A673 (cell line): ENCODE measurements at regions of chr18 and their contacts with region 1.

Region 1: DNA sequence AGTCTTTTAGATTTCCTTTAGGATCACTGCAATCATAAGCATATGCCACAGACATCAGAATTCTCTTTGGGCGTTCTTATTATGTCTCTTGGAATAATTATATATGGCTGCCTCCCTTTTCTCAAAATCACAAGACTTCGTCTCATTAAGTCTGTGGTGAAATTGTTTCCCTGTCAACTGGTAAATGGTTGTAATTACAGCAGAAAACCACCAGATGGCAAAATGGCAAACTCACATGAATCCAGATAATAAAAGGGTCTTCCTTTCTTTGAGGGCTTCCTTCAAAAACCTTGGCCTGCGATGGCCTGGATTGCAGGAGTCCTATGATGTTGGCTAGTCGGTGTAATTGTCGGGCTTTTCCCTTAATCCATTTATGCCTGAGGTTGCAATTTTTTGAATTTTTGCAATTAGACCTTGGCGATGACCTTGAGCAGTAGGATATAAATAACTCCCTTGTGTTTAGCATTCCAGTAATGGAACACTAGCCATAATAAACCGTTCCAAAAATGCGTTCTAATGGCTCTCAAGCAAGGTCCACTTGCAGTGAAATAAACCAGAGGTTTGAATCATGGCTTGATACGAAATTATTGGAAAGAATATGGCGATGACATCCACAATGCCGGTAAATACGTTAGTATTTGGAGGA is 656.4 kb downstream of the MBD2 start:
- DNase-seq: peak; percentile 71
- H3K4me3 ChIP-seq: no peak overlapping the region
- H3K27ac ChIP-seq: no peak overlapping the region
- H3K4me1 ChIP-seq: no peaks in the 10 kb centered on the region
- H3K27me3 ChIP-seq: peaks cover 4% of the 10 kb centered on the region
- CTCF ChIP-seq: peak; percentile 64

Region 2: GRCh38 chr18:53531187-53531586 is 36.9 kb before region 1 on chr18:
- CTCF ChIA-PET with region 1: no interaction called
- POLR2A ChIA-PET with region 1: no interaction called
- intact Hi-C with region 1: no loop called
- DNase-seq: peak; percentile 10
- H3K4me3 ChIP-seq: no peak overlapping the region
- H3K27ac ChIP-seq: no peak overlapping the region
- H3K4me1 ChIP-seq: peaks cover 12% of the 10 kb centered on the region
- H3K27me3 ChIP-seq: no peaks in the 10 kb centered on the region
- CTCF ChIP-seq: no peak

Region 3: GRCh38 chr18:53817976-53818950 is 250.2 kb after region 1 on chr18:
- CTCF ChIA-PET with region 1: no interaction called
- POLR2A ChIA-PET with region 1: no interaction called
- intact Hi-C with region 1: no loop called
- DNase-seq: peak; percentile 63
- H3K4me3 ChIP-seq: no peak overlapping the region
- H3K27ac ChIP-seq: no peak overlapping the region
- H3K4me1 ChIP-seq: peaks cover 6% of the 10 kb centered on the region
- H3K27me3 ChIP-seq: peaks cover 2% of the 10 kb centered on the region
- CTCF ChIP-seq: no peak

Region 4: GRCh38 chr18:53864770-53865169 is 296.7 kb after region 1 on chr18:
- CTCF ChIA-PET with region 1: no interaction called
- POLR2A ChIA-PET with region 1: no interaction called
- intact Hi-C with region 1: loop called (anchors 5 kb)
- DNase-seq: peak; percentile 37
- H3K4me3 ChIP-seq: no peak overlapping the region
- H3K27ac ChIP-seq: no peak overlapping the region
- H3K4me1 ChIP-seq: no peaks in the 10 kb centered on the region
- H3K27me3 ChIP-seq: no peaks in the 10 kb centered on the region
- CTCF ChIP-seq: peak; percentile 43

Region 5: GRCh38 chr18:54043484-54044251 is 475.6 kb after region 1 on chr18:
- CTCF ChIA-PET with region 1: no interaction called
- POLR2A ChIA-PET with region 1: no interaction called
- intact Hi-C with region 1: no loop called
- DNase-seq: no peak
- H3K4me3 ChIP-seq: no peak overlapping the region
- H3K27ac ChIP-seq: no peak overlapping the region
- H3K4me1 ChIP-seq: no peaks in the 10 kb centered on the region
- H3K27me3 ChIP-seq: no peaks in the 10 kb centered on the region
- CTCF ChIP-seq: no peak

Region 6: GRCh38 chr18:54119524-54120019 is 551.5 kb after region 1 on chr18:
- CTCF ChIA-PET with region 1: interaction called, 3 read pairs
- POLR2A ChIA-PET with region 1: no interaction called
- intact Hi-C with region 1: loop called (anchors 5 kb)
- DNase-seq: peak; percentile 71
- H3K4me3 ChIP-seq: peak overlapping the region; percentile 33
- H3K27ac ChIP-seq: no peak overlapping the region
- H3K4me1 ChIP-seq: peaks cover 5% of the 10 kb centered on the region
- H3K27me3 ChIP-seq: no peaks in the 10 kb centered on the region
- CTCF ChIP-seq: peak; percentile 91

Region 7: DNA sequence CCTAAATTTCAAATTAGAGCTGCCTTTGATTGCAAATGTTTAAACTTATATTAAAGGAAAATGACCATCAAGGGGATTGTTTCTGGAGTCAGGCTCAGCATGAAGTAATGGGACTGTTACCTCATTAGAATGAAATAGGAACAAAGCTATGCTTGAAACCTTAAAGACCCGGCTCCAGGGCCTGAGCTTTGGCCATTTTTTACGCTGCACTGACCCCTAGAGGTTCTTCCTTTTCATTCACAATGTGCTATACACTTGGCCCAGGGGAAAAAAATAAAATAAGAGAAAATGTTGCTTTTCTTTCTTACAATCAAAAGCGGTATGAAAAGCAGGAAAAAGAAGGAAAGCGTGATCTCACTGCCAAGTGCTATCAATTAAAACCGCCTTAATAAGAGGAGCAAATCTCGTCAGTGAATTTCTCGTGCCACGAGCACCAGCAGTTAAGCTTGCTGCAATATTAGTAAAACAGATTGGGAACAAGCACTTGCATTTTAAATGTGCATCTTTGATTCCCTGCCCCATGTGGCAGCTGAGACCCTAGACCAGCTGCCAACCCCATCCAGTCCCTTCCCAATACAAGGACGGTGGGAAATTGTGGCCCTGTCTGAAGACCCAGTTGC is 559.8 kb after region 1 on chr18:
- CTCF ChIA-PET with region 1: no interaction called
- POLR2A ChIA-PET with region 1: no interaction called
- intact Hi-C with region 1: loop called (anchors 5 kb)
- DNase-seq: peak; percentile 66
- H3K4me3 ChIP-seq: no peak overlapping the region
- H3K27ac ChIP-seq: no peak overlapping the region
- H3K4me1 ChIP-seq: peaks cover 3% of the 10 kb centered on the region
- H3K27me3 ChIP-seq: no peaks in the 10 kb centered on the region
- CTCF ChIP-seq: peak; percentile 62

Region 8: GRCh38 chr18:54396760-54397159 is 828.7 kb after region 1 on chr18:
- CTCF ChIA-PET with region 1: no interaction called
- POLR2A ChIA-PET with region 1: no interaction called
- intact Hi-C with region 1: no loop called
- DNase-seq: no peak
- H3K4me3 ChIP-seq: no peak overlapping the region
- H3K27ac ChIP-seq: no peak overlapping the region
- H3K4me1 ChIP-seq: peaks cover 7% of the 10 kb centered on the region
- H3K27me3 ChIP-seq: no peaks in the 10 kb centered on the region
- CTCF ChIP-seq: no peak